Psoas muscle (tissue), 8 donors: ENCODE measurements at regions of chr3 and their contacts with region 1.

Region 1: GRCh38 chr3:156659260-156659659 is 15.1 kb upstream of the TIPARP start:
- DNase-seq: no peak
- ATAC-seq: no peak
- H3K4me3 ChIP-seq: no peak overlapping the region
- H3K27ac ChIP-seq: no peak overlapping the region
- H3K4me1 ChIP-seq: no peaks in the 10 kb centered on the region
- H3K27me3 ChIP-seq: no peaks in the 10 kb centered on the region
- CTCF ChIP-seq: no peak

Region 2: GRCh38 chr3:156483961-156484787 is 175.1 kb before region 1 on chr3:
- intact Hi-C with region 1: no loop called
- DNase-seq: no peak
- ATAC-seq: no peak
- H3K4me3 ChIP-seq: no peak overlapping the region
- H3K27ac ChIP-seq: no peak overlapping the region
- H3K4me1 ChIP-seq: no peaks in the 10 kb centered on the region
- H3K27me3 ChIP-seq: no peaks in the 10 kb centered on the region
- CTCF ChIP-seq: no peak

Region 3: GRCh38 chr3:156643729-156644389 is 15.4 kb before region 1 on chr3:
- intact Hi-C with region 1: loop called in 1 of 2 experiments (anchors 1 kb)
- DNase-seq: no peak
- ATAC-seq: peak in 1 of 4 donors; percentile 24
- H3K4me3 ChIP-seq: no peak overlapping the region
- H3K27ac ChIP-seq: no peak overlapping the region
- H3K4me1 ChIP-seq: peaks cover 25% of the 10 kb centered on the region
- H3K27me3 ChIP-seq: no peaks in the 10 kb centered on the region
- CTCF ChIP-seq: no peak